ENCODE measurements at regions of chr18 and their contacts with region 1.

Region 1: GRCh38 chr18:47204908-47205522 is 28.9 kb upstream of the IER3IP1 start:
- DNase-seq: peak; percentile 33
- H3K4me3 ChIP-seq: no peak overlapping the region; a peak in 1 of 4 replicates
- H3K27ac ChIP-seq: peak overlapping the region in 1 of 2 experiments; percentile 93; a peak in 1 of 4 replicates
- H3K4me1 ChIP-seq: peaks cover 0 to 16% of the 10 kb centered on the region in 2 experiments; a peak in 2 of 4 replicates
- H3K27me3 ChIP-seq: no peaks in the 10 kb centered on the region
- CTCF ChIP-seq: peak; percentile 87
- EP300 ChIP-seq: no peak
- RAD21 ChIP-seq: peak; percentile 79

Region 2: GRCh38 chr18:47075098-47075883 is 129.7 kb before region 1 on chr18:
- CTCF ChIA-PET with region 1: interaction called, 12 read pairs
- POLR2A ChIA-PET with region 1: no interaction called
- DNase-seq: no peak
- H3K4me3 ChIP-seq: no peak overlapping the region
- H3K27ac ChIP-seq: no peak overlapping the region
- H3K4me1 ChIP-seq: peaks cover 2 to 5% of the 10 kb centered on the region in 2 experiments; a peak in 1 of 4 replicates
- H3K27me3 ChIP-seq: no peaks in the 10 kb centered on the region
- CTCF ChIP-seq: no peak
- EP300 ChIP-seq: no peak
- RAD21 ChIP-seq: no peak

Region 3: GRCh38 chr18:47113796-47114540 is 91.0 kb before region 1 on chr18:
- CTCF ChIA-PET with region 1: interaction called, 67 read pairs
- POLR2A ChIA-PET with region 1: no interaction called
- DNase-seq: no peak
- H3K4me3 ChIP-seq: no peak overlapping the region
- H3K27ac ChIP-seq: no peak overlapping the region
- H3K4me1 ChIP-seq: peaks cover 0 to 6% of the 10 kb centered on the region in 2 experiments; a peak in 1 of 4 replicates
- H3K27me3 ChIP-seq: no peaks in the 10 kb centered on the region
- CTCF ChIP-seq: no peak
- EP300 ChIP-seq: no peak
- RAD21 ChIP-seq: no peak

Region 4: GRCh38 chr18:47184419-47185050 is 20.5 kb before region 1 on chr18:
- CTCF ChIA-PET with region 1: interaction called, 21 read pairs
- POLR2A ChIA-PET with region 1: no interaction called
- DNase-seq: no peak
- H3K4me3 ChIP-seq: no peak overlapping the region
- H3K27ac ChIP-seq: no peak overlapping the region; a peak in 1 of 4 replicates
- H3K4me1 ChIP-seq: no peaks in the 10 kb centered on the region
- H3K27me3 ChIP-seq: no peaks in the 10 kb centered on the region
- CTCF ChIP-seq: no peak
- EP300 ChIP-seq: no peak
- RAD21 ChIP-seq: no peak

Region 5: DNA sequence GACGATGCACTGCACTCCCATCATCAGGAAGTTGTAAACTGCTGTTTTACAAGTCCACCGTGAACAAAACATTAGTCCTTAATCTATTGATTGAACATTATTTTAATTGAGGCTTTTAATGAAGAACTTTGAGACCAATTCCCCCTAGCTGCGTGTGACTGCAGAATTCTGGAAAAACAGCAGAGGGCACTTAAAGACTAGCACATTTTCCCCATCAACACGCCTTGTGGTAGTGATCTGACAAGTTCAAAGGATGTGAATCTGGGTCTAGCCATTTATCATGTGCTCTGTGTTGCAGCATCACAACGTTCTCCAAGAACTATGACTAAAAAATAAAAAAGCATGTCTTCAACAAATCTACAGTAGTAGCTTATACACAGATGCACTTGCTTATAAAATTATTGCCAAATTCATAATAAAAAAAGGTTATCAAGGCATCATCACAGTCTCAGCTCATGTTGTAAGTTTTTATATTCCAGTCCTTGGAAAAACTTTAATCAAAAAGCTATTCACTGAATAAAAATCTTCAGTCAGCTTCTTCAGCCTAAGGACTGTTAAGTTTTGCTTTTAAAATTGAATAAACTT is 10.6 kb after region 1 on chr18:
- CTCF ChIA-PET with region 1: interaction called, 42 read pairs
- POLR2A ChIA-PET with region 1: no interaction called
- DNase-seq: peak; percentile 54
- H3K4me3 ChIP-seq: peak overlapping the region in 1 of 2 experiments; percentile 32; a peak in 1 of 4 replicates
- H3K27ac ChIP-seq: no peak overlapping the region
- H3K4me1 ChIP-seq: no peaks in the 10 kb centered on the region
- H3K27me3 ChIP-seq: no peaks in the 10 kb centered on the region
- CTCF ChIP-seq: peak; percentile 67
- EP300 ChIP-seq: no peak
- RAD21 ChIP-seq: peak; percentile 97

Region 6: DNA sequence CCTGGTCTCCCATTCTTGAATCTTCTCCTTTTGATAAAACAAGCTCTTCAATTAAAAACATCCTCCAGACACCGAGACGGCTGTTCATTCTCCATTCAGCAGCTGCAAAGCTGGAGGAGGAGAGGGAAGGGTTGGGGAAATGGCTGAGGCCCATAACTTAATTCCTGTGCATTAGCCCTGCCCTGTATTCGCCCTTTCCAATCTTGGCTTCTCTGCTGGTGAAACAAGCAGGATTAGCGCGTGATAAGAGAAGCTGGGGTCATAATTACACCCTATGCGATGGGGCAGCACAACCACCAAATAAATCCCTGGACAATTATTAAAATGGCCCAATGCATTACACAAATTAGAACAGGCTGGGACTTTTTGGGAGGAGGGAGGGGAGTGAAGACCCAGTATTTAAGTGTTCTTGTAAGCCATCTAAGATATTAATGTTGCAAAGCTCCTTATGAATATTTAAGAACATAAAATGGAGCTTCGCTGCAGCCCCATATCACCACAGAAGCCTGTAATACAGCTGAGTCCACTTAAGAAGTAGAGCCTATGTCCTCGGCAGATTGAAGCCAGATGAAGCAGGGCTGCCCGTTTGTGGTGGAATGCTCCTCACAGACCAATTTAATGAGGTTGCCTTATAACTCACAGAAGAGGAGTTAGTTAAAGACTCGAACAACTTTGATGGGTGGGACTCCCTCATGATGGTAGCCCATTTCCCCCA is 223.1 kb after region 1 on chr18:
- CTCF ChIA-PET with region 1: no interaction called
- POLR2A ChIA-PET with region 1: no interaction called
- DNase-seq: no peak
- H3K4me3 ChIP-seq: no peak overlapping the region
- H3K27ac ChIP-seq: no peak overlapping the region
- H3K4me1 ChIP-seq: no peaks in the 10 kb centered on the region
- H3K27me3 ChIP-seq: no peaks in the 10 kb centered on the region
- CTCF ChIP-seq: no peak
- EP300 ChIP-seq: no peak
- RAD21 ChIP-seq: no peak

Region 7: GRCh38 chr18:47448956-47449355 is 243.9 kb after region 1 on chr18:
- CTCF ChIA-PET with region 1: no interaction called
- POLR2A ChIA-PET with region 1: no interaction called
- DNase-seq: peak; percentile 23
- H3K4me3 ChIP-seq: no peak overlapping the region
- H3K27ac ChIP-seq: no peak overlapping the region
- H3K4me1 ChIP-seq: peaks cover 0 to 3% of the 10 kb centered on the region in 2 experiments; a peak in 1 of 4 replicates
- H3K27me3 ChIP-seq: no peaks in the 10 kb centered on the region
- CTCF ChIP-seq: no peak
- EP300 ChIP-seq: no peak
- RAD21 ChIP-seq: no peak

Region 8: GRCh38 chr18:47756364-47757016 is 551.5 kb after region 1 on chr18:
- CTCF ChIA-PET with region 1: interaction called, 22 read pairs
- POLR2A ChIA-PET with region 1: no interaction called
- DNase-seq: peak; percentile 75
- H3K4me3 ChIP-seq: no peak overlapping the region; a peak in 1 of 4 replicates
- H3K27ac ChIP-seq: no peak overlapping the region
- H3K4me1 ChIP-seq: no peaks in the 10 kb centered on the region
- H3K27me3 ChIP-seq: no peaks in the 10 kb centered on the region
- CTCF ChIP-seq: peak; percentile 90
- EP300 ChIP-seq: no peak
- RAD21 ChIP-seq: peak; percentile 86